ENCODE measurements at regions of chr5 and their contacts with region 1.

Region 1: DNA sequence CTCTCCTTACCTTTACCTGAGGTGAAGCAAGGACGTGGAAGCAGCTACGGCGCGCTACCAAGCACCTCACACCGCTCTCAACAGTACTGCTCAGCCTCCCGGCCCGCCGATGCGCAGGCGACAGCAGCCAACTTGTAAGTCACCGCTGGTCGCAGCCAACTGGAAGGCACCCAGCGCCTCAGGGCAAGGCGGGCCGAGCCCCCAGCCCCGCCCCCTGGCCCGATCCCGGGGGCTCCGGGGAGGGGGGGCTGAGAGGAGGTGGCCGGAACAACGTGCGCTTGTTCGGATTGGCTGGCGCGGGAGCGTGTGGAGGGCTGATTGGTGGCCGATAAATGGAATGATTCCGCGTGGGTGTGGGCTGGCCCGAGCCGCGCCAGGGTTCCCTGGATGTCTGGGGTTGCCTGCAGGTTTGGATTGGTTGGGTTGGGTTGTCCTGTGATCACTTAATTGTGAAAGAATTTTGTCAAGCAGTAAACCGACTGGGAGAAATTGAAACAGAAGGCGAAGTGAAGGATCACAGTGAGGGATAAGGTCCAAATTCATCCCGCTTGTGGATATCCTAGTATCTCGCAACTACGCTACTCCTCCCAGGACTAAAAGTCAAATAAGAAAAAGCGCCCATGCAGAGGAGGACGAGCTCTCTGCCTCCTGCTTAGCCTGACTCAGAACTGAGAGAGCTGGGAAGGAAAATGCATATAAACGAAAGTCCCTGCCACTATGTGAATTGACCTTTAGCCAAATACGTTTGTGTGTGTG is at the start of gene STARD4:
- DNase-seq: peak; percentile 96
- ATAC-seq: peak; percentile 95
- H3K4me3 Mint-ChIP-seq: peak within 1 kb of the TSS; percentile 99
- H3K27ac Mint-ChIP-seq: peak within 1 kb of the TSS; percentile 97
- H3K4me1 Mint-ChIP-seq: peaks cover 29% of the 10 kb centered on the region
- H3K27me3 Mint-ChIP-seq: peaks cover 2% of the 10 kb centered on the region
- total RNA-seq, gene STARD4: 47.0 to 47.1 TPM

Region 2: DNA sequence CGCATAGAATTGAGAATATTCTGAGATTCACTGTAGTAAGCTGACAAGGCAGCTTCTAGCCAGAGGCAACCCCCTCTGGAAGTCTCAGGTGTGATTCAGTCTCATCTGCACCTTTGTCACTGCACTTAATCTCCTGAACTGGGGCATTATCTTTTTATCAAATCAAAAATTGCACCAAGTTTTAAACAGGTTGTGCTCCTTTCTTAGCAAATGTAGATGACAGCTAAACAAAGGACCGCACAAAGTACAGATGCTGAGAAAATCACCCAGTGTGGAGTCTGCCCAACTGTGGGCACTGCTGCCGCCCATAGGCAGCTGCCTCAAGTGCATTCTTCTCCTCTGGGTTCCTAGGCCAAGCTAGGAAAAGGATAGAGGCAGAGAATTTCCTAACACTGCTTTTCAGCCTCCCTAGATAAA is 51.3 kb before region 1 on chr5:
- POLR2A ChIA-PET with region 1: no interaction called
- DNase-seq: no peak
- ATAC-seq: no peak
- H3K4me3 Mint-ChIP-seq: no peak overlapping the region
- H3K27ac Mint-ChIP-seq: no peak overlapping the region
- H3K4me1 Mint-ChIP-seq: peaks cover 6% of the 10 kb centered on the region
- H3K27me3 Mint-ChIP-seq: no peaks in the 10 kb centered on the region

Region 3: GRCh38 chr5:111530298-111530740 is 17.8 kb after region 1 on chr5:
- POLR2A ChIA-PET with region 1: interaction called, 11 read pairs
- DNase-seq: peak; percentile 70
- ATAC-seq: peak; percentile 100
- H3K4me3 Mint-ChIP-seq: peak overlapping the region; percentile 60
- H3K27ac Mint-ChIP-seq: peak overlapping the region; percentile 82
- H3K4me1 Mint-ChIP-seq: peaks cover 16% of the 10 kb centered on the region
- H3K27me3 Mint-ChIP-seq: no peaks in the 10 kb centered on the region

Region 4: GRCh38 chr5:111685971-111686370 is 173.4 kb after region 1 on chr5:
- POLR2A ChIA-PET with region 1: no interaction called
- DNase-seq: no peak
- ATAC-seq: no peak
- H3K4me3 Mint-ChIP-seq: no peak overlapping the region
- H3K27ac Mint-ChIP-seq: no peak overlapping the region
- H3K4me1 Mint-ChIP-seq: no peaks in the 10 kb centered on the region
- H3K27me3 Mint-ChIP-seq: no peaks in the 10 kb centered on the region

Measured in activated naive CD8-positive, alpha-beta T cell treated with anti-CD3 and anti-CD28 coated beads, Interleukin-2, amount 10 ng/mL, durations not matched to agents 7 days and 5 days (primary cell).